Activated CD4-positive, alpha-beta memory T cell treated with anti-CD3 and anti-CD28 coated beads, Interleukin-2, amount 10 ng/mL, durations not matched to agents 7 days and 5 days (primary cell): ENCODE measurements at regions of chr6 and their contacts with region 1.

Region 1: DNA sequence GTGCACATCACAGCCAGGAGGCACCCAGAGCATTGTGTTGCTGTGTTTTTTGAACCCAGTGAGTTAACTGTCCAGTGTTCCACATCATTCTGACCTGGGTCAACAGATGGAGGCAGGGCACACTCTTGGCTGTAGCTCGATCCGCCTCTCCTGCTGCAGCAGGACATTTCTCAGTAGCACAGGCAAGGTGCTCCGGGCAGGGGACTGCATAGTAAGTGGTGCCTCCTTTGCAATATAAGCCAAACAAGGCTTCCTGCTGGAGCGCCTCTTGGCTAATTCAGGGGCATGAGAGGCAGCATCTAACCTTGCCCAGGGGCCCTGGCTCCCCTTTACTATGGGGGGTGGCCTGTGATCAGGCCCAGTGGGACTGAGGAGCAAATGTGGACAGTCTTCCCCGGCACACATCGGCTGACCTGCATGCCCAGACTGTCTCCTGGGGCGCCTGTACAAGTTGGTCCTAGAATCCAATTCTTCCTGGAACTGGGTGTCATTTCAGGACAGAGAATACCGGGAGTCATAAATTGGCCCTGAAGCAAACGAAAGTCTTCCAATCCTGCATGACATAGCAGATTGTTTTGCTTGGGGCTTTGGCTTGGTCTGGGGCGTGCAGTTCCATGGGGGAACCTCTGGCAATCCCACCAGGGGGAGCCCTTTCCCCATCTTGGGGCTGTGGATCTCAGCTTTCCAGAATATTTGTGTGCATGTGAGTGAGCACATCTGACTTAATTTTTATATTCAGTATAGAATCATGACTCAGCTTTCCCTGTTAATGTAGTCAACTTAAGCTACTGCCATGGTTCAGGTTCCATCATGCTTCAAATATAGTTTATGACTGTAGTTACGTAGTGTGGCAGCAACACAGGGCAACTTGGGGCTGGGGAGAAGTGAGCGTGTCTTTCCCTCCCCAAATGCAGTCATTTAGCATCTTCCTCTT is 56.0 kb upstream of the DDR1 start:
- DNase-seq: peak; percentile 79
- H3K4me3 Mint-ChIP-seq: peak overlapping the region; percentile 86
- H3K27ac Mint-ChIP-seq: peak overlapping the region; percentile 66
- H3K4me1 Mint-ChIP-seq: peaks cover 57% of the 10 kb centered on the region
- H3K27me3 Mint-ChIP-seq: no peaks in the 10 kb centered on the region

Region 2: DNA sequence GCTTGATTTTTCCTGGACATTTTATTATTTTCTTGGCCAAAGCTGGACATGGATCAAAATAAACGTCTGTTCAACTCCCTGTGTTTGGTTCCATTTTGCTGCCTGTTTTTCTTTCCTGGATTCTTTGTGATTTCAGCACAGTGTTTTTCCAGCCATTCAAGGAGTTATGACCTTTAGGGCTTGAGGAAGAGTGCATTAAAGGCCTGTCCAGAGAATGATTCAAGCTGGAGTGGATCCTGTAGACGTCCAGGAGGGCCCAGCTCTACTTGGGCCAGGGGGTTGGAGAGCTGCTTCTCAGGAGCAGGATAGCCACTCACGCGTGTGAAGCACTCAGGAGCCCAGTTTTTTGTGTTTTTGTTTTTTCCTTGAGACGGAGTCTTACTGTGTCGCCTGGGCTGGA is 27.4 kb before region 1 on chr6:
- CTCF ChIA-PET with region 1: no interaction called
- POLR2A ChIA-PET with region 1: no interaction called
- DNase-seq: no peak
- H3K4me3 Mint-ChIP-seq: no peak overlapping the region
- H3K27ac Mint-ChIP-seq: no peak overlapping the region
- H3K4me1 Mint-ChIP-seq: peaks cover 12% of the 10 kb centered on the region
- H3K27me3 Mint-ChIP-seq: peaks cover 3% of the 10 kb centered on the region

Region 3: DNA sequence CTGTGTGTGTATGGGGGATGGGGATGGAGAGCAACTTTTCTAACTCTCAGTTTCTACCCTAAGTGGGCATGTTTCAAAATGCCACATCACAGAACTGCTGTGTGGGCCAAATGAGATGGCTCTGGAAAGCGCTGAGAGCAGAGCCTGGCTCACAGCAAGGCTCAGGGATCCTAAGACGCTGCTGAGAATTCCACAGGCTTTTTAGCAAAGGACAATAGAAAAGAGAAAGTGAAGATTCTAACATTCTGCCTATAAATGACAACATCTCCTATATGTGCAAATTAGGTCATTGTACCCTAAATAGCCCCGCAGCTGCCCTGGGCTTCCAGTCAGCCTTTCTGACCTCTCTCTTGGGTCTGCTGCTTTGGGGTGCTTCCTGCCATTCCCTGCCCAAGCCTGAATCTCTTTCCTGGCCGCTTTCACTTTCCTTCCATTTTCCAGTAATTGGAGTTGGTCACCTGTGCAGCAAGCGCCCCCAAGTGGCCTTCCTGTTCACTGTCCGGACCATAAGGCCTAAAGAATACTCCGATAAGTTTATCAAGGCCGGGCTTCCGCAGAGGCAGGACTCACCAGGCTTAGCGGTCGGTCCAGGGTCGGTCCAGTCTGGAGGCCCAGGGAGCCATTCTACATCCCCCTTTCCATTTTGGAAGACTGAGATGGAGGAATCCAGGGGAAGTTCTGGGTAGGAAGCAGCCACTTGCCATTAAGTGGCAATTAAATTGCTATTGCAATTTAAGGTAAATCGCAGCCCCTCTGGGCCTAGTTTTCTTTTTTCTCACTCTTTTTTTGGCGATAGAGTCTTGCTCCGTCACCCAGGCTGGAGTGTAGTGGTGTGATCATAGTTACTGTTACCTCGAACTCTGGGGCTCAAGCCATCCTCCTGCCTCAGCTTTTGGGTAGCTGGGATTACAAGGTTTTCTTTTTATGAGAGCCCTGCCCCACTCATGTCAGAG is 49.4 kb after region 1 on chr6:
- CTCF ChIA-PET with region 1: interaction called, 82 read pairs
- POLR2A ChIA-PET with region 1: interaction called, 8 read pairs
- DNase-seq: peak; percentile 77
- H3K4me3 Mint-ChIP-seq: peak overlapping the region; percentile 49
- H3K27ac Mint-ChIP-seq: no peak overlapping the region
- H3K4me1 Mint-ChIP-seq: peaks cover 11% of the 10 kb centered on the region
- H3K27me3 Mint-ChIP-seq: peaks cover 8% of the 10 kb centered on the region

Region 4: GRCh38 chr6:30907758-30908591 is 79.7 kb after region 1 on chr6 and contains the start of gene GTF2H4:
- CTCF ChIA-PET with region 1: interaction called, 22 read pairs
- POLR2A ChIA-PET with region 1: interaction called, 3 read pairs
- DNase-seq: peak; percentile 96
- H3K4me3 Mint-ChIP-seq: peak within 1 kb of the TSS; percentile 91
- H3K27ac Mint-ChIP-seq: peak within 1 kb of the TSS; percentile 32
- H3K4me1 Mint-ChIP-seq: peaks cover 26% of the 10 kb centered on the region
- H3K27me3 Mint-ChIP-seq: no peaks in the 10 kb centered on the region
- total RNA-seq, gene GTF2H4: 25.6 to 26.4 TPM

Region 5: GRCh38 chr6:30951907-30952469 is 123.7 kb after region 1 on chr6:
- CTCF ChIA-PET with region 1: no interaction called
- POLR2A ChIA-PET with region 1: no interaction called
- DNase-seq: no peak
- H3K4me3 Mint-ChIP-seq: no peak overlapping the region
- H3K27ac Mint-ChIP-seq: no peak overlapping the region
- H3K4me1 Mint-ChIP-seq: peaks cover 8% of the 10 kb centered on the region
- H3K27me3 Mint-ChIP-seq: peaks cover 86% of the 10 kb centered on the region

Region 6: GRCh38 chr6:31079656-31080261 is 251.5 kb after region 1 on chr6:
- CTCF ChIA-PET with region 1: interaction called, 27 read pairs
- POLR2A ChIA-PET with region 1: interaction called, 5 read pairs
- DNase-seq: peak; percentile 70
- H3K4me3 Mint-ChIP-seq: no peak overlapping the region
- H3K27ac Mint-ChIP-seq: no peak overlapping the region
- H3K4me1 Mint-ChIP-seq: peaks cover 9% of the 10 kb centered on the region
- H3K27me3 Mint-ChIP-seq: peaks cover 12% of the 10 kb centered on the region